ENCODE measurements at regions of chr16 and their contacts with region 1.

Region 1: GRCh38 chr16:85086347-85087291 is 25.7 kb downstream of the CIBAR2 start:
- DNase-seq: peak; percentile 75
- ATAC-seq: peak; percentile 82
- H3K4me3 ChIP-seq: no peak overlapping the region
- H3K4me3 Mint-ChIP-seq: no peak overlapping the region
- H3K27ac ChIP-seq: no peak overlapping the region
- H3K27ac Mint-ChIP-seq: no peak overlapping the region
- H3K4me1 ChIP-seq: peaks cover 24 to 28% of the 10 kb centered on the region in 2 donors
- H3K4me1 Mint-ChIP-seq: peaks cover 26% of the 10 kb centered on the region
- H3K27me3 ChIP-seq: peaks cover 0 to 13% (median 4%) of the 10 kb centered on the region in 4 experiments
- H3K27me3 Mint-ChIP-seq: peaks cover 13% of the 10 kb centered on the region
- CTCF ChIP-seq: peak; percentile 78

Region 2: DNA sequence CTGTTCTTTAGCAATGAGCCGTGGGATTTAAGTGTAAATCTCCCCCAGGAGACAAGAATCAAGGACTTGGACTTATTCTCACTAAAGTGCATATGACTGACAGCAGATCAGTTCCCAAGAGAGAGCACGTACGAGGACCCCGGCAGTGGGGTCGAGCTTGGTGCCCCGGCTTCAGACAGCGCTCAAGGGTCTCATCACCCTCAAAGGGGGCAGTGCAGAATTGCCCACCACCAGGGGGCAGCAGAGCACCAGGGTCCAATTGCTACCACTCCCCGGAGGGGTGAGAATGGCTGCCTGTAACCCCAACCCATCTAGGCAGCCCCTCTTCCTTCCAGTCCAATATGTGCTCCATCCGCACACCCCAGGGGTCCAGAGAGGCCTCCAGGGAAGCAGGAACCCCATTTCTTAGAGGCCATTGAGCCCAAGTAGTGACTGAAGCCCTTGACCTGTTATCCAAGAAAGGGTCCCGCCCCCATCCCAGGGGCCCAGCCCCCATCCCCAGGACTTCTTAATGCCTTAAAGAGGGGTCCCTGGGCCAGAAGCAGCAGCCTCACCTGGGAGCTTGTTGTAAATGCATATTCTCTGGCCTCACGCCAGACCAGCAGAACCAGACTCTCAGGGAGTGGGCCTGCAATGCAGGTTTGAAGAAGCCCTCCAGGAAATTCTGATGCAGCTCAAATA is 161.4 kb before region 1 on chr16:
- CTCF ChIA-PET with region 1: interaction called, 12 read pairs
- POLR2A ChIA-PET with region 1: no interaction called
- intact Hi-C with region 1: no loop called
- DNase-seq: peak; percentile 66
- ATAC-seq: peak; percentile 53
- H3K4me3 ChIP-seq: no peak overlapping the region
- H3K4me3 Mint-ChIP-seq: no peak overlapping the region
- H3K27ac ChIP-seq: no peak overlapping the region
- H3K27ac Mint-ChIP-seq: no peak overlapping the region
- H3K4me1 ChIP-seq: no peaks in the 10 kb centered on the region
- H3K4me1 Mint-ChIP-seq: peaks cover 1% of the 10 kb centered on the region
- H3K27me3 ChIP-seq: no peaks in the 10 kb centered on the region
- H3K27me3 Mint-ChIP-seq: peaks cover 8% of the 10 kb centered on the region
- CTCF ChIP-seq: peak; percentile 81

Region 3: DNA sequence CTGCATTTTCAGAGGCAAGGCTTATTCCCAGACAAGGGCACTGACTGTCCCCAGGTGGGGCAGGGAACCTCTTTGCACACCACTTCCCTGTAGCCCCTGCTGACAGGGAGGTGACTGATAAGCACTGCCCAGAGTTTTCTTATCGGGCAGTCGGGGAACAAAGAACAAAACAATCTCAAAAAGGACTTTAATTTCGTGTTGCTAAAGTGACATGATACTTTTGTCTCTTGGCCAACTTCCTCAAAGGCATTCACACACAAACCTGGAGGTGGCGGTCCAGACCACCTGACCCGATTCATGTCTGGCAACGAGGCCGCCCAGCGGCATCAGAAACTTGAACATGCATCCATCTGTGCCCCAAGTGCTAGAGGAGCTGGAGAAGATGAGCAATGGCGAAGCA is 104.2 kb before region 1 on chr16:
- CTCF ChIA-PET with region 1: interaction called, 10 read pairs
- POLR2A ChIA-PET with region 1: no interaction called
- intact Hi-C with region 1: no loop called
- DNase-seq: no peak
- ATAC-seq: no peak
- H3K4me3 ChIP-seq: no peak overlapping the region
- H3K4me3 Mint-ChIP-seq: no peak overlapping the region
- H3K27ac ChIP-seq: no peak overlapping the region
- H3K27ac Mint-ChIP-seq: no peak overlapping the region
- H3K4me1 ChIP-seq: no peaks in the 10 kb centered on the region
- H3K4me1 Mint-ChIP-seq: no peaks in the 10 kb centered on the region
- H3K27me3 ChIP-seq: no peaks in the 10 kb centered on the region
- H3K27me3 Mint-ChIP-seq: no peaks in the 10 kb centered on the region
- CTCF ChIP-seq: no peak

Region 4: GRCh38 chr16:85027349-85027957 is 59.2 kb before region 1 on chr16 and contains the start of gene KIAA0513:
- CTCF ChIA-PET with region 1: interaction called, 9 read pairs
- POLR2A ChIA-PET with region 1: no interaction called
- intact Hi-C with region 1: loop called (anchors 1 kb)
- DNase-seq: peak; percentile 96
- ATAC-seq: peak; percentile 92
- H3K4me3 ChIP-seq: peak within 1 kb of the TSS; percentile 57 to 84 (median 80)
- H3K4me3 Mint-ChIP-seq: peak within 1 kb of the TSS; percentile 94
- H3K27ac ChIP-seq: peak within 1 kb of the TSS; percentile 52 to 75
- H3K27ac Mint-ChIP-seq: peak within 1 kb of the TSS; percentile 89
- H3K4me1 ChIP-seq: peaks cover 28 to 33% of the 10 kb centered on the region in 2 donors
- H3K4me1 Mint-ChIP-seq: peaks cover 42% of the 10 kb centered on the region
- H3K27me3 ChIP-seq: peaks cover 0 to 6% (median 2%) of the 10 kb centered on the region in 4 experiments
- H3K27me3 Mint-ChIP-seq: peaks cover 13% of the 10 kb centered on the region
- CTCF ChIP-seq: no peak
- total RNA-seq, gene KIAA0513: 1.1 and 1.7 TPM in 2 replicates

Region 5: DNA sequence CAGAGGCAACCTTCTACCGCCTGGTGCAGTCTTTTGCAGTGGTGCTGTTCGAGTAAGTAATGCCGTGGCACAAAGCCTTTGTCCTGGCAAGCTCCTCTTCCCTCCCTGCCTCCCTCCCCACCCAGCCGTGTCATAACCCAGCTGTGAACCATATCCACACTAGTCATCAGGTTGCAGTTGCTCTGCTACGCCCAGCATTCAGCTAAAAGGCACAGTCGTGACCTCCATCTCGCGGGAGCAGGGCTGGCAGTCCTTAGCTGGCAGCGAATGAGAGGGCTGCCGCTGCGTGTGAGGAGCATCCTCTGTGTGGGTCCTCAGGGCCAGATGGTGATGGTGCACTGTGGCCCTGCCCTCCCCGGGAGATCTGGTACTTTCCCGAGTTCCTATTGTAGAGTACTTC is 13.7 kb before region 1 on chr16:
- CTCF ChIA-PET with region 1: interaction called, 12 read pairs
- POLR2A ChIA-PET with region 1: no interaction called
- intact Hi-C with region 1: no loop called
- DNase-seq: no peak
- ATAC-seq: no peak
- H3K4me3 ChIP-seq: no peak overlapping the region
- H3K4me3 Mint-ChIP-seq: no peak overlapping the region
- H3K27ac ChIP-seq: no peak overlapping the region
- H3K27ac Mint-ChIP-seq: no peak overlapping the region
- H3K4me1 ChIP-seq: peaks cover 5 to 9% of the 10 kb centered on the region in 2 donors
- H3K4me1 Mint-ChIP-seq: peaks cover 2% of the 10 kb centered on the region
- H3K27me3 ChIP-seq: peaks cover 0 to 4% (median 0%) of the 10 kb centered on the region in 4 experiments
- H3K27me3 Mint-ChIP-seq: peaks cover 13% of the 10 kb centered on the region
- CTCF ChIP-seq: no peak